ENCODE measurements at regions of chrX and their contacts with region 1.

Region 1: DNA sequence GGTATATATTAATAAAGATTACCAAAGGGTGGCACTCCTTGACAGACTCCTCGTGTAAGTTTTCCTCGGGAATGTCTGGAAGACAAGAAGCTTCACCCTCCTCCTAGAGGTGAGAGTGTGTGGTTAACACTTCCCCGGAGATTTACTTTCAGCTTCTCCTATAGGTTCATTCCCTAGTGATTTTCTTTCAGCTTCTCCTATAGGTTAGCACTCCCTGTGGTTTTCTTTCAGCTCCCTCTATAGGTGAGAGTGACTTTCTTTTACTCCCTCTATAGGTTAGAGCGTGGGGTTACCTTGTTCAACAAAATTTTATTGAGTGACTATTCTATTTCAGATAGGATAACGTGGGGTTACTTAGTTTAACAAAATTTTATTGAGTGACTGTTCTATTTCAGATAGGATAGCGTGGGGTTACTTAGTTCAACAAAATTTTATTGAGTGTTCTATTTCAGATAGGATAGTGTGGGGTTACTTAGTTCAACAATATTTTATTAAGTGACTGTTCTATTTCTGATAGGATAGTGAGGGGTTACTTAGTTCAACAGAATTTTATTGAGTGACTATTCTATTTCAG is 106.0 kb upstream of the PLAC1 start:
- DNase-seq: no peak
- H3K4me3 ChIP-seq: no peak overlapping the region
- CTCF ChIP-seq: peak; percentile 10

Region 2: GRCh38 chrX:134520860-134521390 is 243.4 kb before region 1 on chrX:
- CTCF ChIA-PET with region 1: interaction called, 10 read pairs
- POLR2A ChIA-PET with region 1: no interaction called
- DNase-seq: no peak
- H3K4me3 ChIP-seq: no peak overlapping the region
- CTCF ChIP-seq: peak; percentile 58

Region 3: GRCh38 chrX:134737061-134737460 is 27.2 kb before region 1 on chrX:
- CTCF ChIA-PET with region 1: no interaction called
- POLR2A ChIA-PET with region 1: no interaction called
- DNase-seq: no peak
- H3K4me3 ChIP-seq: no peak overlapping the region
- CTCF ChIP-seq: no peak

Region 4: DNA sequence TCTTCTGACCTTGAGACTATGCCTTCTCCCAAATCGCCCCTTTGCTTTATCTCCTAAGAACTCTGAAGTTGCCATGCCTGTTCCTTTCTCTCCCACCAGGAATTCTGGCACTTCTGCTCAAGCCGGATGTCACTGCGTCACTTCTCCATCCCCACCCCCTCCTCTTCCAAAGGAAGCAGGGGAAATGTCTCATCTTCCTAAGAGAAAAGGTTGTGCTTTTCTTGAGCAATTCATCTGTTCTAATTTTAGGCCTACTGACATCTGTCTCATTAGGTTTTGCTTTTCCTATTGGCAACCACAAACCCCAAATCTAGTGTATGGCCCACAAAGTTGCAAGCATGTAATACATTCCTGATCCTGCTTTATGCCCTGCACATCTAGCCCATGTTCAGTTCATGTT is 57.1 kb after region 1 on chrX:
- CTCF ChIA-PET with region 1: no interaction called
- POLR2A ChIA-PET with region 1: no interaction called
- DNase-seq: no peak
- H3K4me3 ChIP-seq: no peak overlapping the region
- CTCF ChIP-seq: no peak

Measured in AG04449 (cell line).